Gastrocnemius medialis (tissue), 4 donors: ENCODE measurements at regions of chrX and their contacts with region 1.

Region 1: DNA sequence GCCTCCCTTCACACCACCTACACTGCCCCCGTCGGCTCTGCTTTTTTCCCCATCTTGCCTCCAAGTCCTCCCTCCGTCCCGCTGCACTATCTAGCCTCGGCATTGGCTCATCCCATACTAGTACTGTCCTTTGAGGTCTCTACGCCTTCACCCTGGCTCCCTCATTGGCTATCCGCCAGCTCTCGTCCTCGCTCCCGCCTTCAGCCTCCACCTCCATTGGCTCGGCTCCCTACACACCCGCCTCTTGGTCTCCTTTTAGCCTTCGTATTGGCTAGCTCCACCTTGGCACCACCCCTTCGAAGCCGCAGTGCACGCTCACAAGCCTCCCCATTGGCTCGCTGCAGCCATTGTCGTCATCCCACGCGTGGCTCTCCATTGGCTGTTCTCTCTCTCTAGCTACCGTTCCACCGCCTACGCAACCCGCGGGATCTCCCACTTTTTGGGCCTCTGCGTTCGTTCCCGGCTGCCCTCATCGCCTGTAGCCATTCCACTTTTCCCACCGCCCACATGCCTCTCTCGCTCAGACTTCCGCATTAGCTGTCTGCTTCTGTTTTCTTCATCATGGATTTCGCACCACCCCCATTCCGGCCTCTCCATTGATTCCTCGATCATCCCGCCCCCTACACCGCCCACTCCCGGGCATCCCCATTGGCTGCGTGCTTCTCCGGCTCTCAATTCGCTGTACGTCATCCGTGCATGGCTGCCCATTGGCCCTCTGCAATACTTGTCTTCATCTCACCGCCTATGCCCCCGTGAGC is 404 bp upstream of the PPP1R3F start:
- DNase-seq: peak; percentile 96 to 98
- ATAC-seq: peak; percentile 89 to 95
- H3K4me3 ChIP-seq: peak overlapping the region; percentile 57 to 69 (median 60)
- H3K27ac ChIP-seq: peak overlapping the region; percentile 77 to 93 (median 92)
- H3K4me1 ChIP-seq: peaks cover 9 to 10% of the 10 kb centered on the region in 2 donors
- H3K27me3 ChIP-seq: no peaks in the 10 kb centered on the region
- CTCF ChIP-seq: no peak
- POLR2A ChIP-seq: peak in 1 of 2 donors; percentile 35

Region 2: GRCh38 chrX:48945516-48946348 is 323.5 kb before region 1 on chrX:
- in situ Hi-C with region 1: no loop called
- intact Hi-C with region 1: no loop called
- DNase-seq: peak in 1 of 2 donors; percentile 15
- ATAC-seq: no peak
- H3K4me3 ChIP-seq: no peak overlapping the region
- H3K27ac ChIP-seq: no peak overlapping the region
- H3K4me1 ChIP-seq: peaks cover 0 to 5% of the 10 kb centered on the region in 2 donors
- H3K27me3 ChIP-seq: no peaks in the 10 kb centered on the region
- CTCF ChIP-seq: peak; percentile 17 to 57 (median 29)
- POLR2A ChIP-seq: no peak

Region 3: GRCh38 chrX:49199906-49200771 is 69.0 kb before region 1 on chrX and contains the start of gene SYP:
- in situ Hi-C with region 1: no loop called
- intact Hi-C with region 1: loop called (anchors 5 kb)
- DNase-seq: peak; percentile 70 to 82
- ATAC-seq: peak; percentile 95 to 97
- H3K4me3 ChIP-seq: peak within 1 kb of the TSS; percentile 6 to 45 (median 38)
- H3K27ac ChIP-seq: peak within 1 kb of the TSS; percentile 44 to 60 (median 53)
- H3K4me1 ChIP-seq: peaks cover 2 to 3% of the 10 kb centered on the region in 2 donors
- H3K27me3 ChIP-seq: no peaks in the 10 kb centered on the region
- CTCF ChIP-seq: no peak
- POLR2A ChIP-seq: peak; percentile 34 to 53
- total RNA-seq, gene SYP: 0.15 to 3.9 (median 0.40) TPM

Region 4: DNA sequence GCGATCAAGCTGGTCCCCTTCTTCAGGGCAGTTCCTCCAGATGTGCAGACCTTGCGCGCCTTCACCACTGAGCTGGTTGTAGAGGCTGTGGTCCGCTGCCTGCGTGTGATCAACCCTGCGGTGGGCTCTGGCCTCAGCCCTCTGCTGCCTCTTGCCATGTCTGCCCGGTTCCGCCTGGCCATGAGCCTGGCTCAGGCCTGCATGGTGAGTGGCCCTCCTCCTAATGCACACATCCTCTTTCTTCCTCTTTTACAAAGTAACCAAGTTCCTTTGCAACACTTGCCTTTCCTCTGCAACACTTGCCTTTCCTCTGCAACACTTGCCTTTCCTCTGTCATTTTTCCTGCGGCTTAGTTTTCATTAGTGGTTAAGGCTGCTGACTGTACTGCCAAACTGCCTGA is 32.1 kb before region 1 on chrX:
- in situ Hi-C with region 1: no loop called
- intact Hi-C with region 1: loop called (anchors 2 kb)
- DNase-seq: no peak
- ATAC-seq: no peak
- H3K4me3 ChIP-seq: no peak overlapping the region
- H3K27ac ChIP-seq: no peak overlapping the region
- H3K4me1 ChIP-seq: peaks cover 0 to 5% of the 10 kb centered on the region in 2 donors
- H3K27me3 ChIP-seq: no peaks in the 10 kb centered on the region
- CTCF ChIP-seq: no peak
- POLR2A ChIP-seq: no peak

Region 5: DNA sequence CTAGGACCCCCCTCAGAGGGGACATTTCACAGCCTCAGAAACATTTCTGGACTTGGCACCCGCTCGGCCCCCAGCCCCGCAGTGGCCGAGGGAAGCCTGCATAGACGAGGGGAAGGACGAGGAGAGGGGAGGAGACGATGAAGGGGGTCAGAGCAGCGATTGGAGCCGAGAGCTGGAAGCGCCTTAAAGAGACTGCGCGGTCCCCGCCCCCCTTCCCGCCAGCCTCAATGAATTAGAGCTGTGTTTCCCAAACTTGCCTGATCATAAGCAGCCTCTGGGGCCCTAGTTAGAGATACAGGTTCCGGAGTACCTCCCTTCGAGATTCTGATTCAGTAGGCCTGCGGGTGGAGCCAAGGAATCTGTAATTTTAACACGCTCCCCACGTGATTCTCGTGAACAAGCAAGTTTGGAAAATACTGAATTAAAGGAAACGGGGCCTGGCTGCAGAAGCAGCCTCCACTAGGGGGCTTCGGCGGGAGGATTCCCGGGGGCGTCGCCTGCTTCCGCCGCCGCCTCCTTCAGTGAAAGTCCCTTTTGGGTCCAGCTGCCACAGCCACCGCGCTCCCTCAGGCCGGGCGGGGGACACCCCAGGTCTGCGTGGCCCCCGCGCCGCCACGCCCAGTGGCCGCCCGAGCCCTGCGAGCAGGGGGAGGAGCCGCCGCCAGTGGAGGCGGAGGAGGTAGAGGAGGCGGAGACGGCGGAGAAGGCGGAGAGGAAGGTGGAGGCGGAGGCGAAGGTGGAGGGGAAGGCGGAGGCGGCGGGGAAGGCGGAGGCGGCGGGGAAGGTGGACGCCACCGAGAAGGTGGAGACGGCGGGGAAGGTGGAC is 609.9 kb after region 1 on chrX and contains the start of gene USP27X:
- in situ Hi-C with region 1: no loop called
- intact Hi-C with region 1: loop called (anchors 10 kb)
- DNase-seq: peak; percentile 47 to 52
- ATAC-seq: peak; percentile 79 to 86
- H3K4me3 ChIP-seq: peak within 1 kb of the TSS; percentile 51 to 69 (median 68)
- H3K27ac ChIP-seq: peak within 1 kb of the TSS; percentile 73 to 86 (median 78)
- H3K4me1 ChIP-seq: peaks cover 0 to 8% of the 10 kb centered on the region in 2 donors
- H3K27me3 ChIP-seq: no peaks in the 10 kb centered on the region
- CTCF ChIP-seq: peak in 4 of 5 experiments; percentile 33 to 57 (median 48)
- POLR2A ChIP-seq: peak; percentile 21 to 25
- total RNA-seq, gene USP27X: 1.0 to 2.0 (median 1.7) TPM